MCF 10A (cell line): ENCODE measurements at regions of chr3 and their contacts with region 1.

Region 1: GRCh38 chr3:156554842-156555687 is at the start of gene SSR3:
- DNase-seq: peak; percentile 99
- H3K4me3 Mint-ChIP-seq: peak within 1 kb of the TSS; percentile 89
- H3K27ac Mint-ChIP-seq: peak within 1 kb of the TSS; percentile 92
- H3K4me1 Mint-ChIP-seq: peaks cover 30% of the 10 kb centered on the region
- H3K27me3 Mint-ChIP-seq: no peaks in the 10 kb centered on the region
- CTCF ChIP-seq: peak; percentile 8
- total RNA-seq, gene SSR3: 447 and 568 TPM in 2 replicates

Region 2: DNA sequence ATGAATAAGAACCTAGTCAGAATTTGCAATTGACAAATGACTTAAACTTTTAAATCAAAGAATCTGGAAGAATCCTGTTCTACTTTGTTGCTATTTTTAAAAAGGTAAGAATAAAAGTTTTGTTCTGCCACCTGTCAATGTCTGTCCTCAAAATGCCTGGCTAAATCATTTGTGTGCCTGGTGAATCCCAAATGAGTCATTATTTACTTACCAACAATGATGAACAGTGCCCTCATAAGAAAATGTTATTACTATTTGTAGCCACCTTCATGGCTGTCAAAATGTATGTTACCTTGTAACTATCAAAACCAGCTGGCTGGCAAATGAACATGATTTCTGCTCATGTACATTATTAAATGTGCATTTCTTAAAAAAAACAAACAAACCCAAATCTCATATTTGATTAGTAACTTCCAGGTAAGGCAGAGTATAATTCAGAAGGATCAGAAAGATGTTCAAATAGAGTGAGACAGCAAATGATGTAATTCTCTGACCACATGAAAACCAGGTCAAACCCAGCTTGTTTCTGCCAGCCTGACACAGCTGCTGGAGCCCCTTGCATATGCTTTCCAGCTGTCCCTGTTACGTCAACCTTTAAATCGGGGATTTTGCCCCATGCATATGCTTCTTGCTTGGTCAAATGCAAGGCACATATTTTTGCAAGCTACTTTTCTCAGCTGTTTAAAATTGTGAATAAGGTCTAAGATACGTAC is 138.1 kb before region 1 on chr3:
- CTCF ChIA-PET with region 1: no interaction called
- POLR2A ChIA-PET with region 1: no interaction called
- intact Hi-C with region 1: no loop called
- DNase-seq: no peak
- H3K4me3 Mint-ChIP-seq: no peak overlapping the region
- H3K27ac Mint-ChIP-seq: no peak overlapping the region
- H3K4me1 Mint-ChIP-seq: no peaks in the 10 kb centered on the region
- H3K27me3 Mint-ChIP-seq: peaks cover 27% of the 10 kb centered on the region
- CTCF ChIP-seq: no peak

Region 3: DNA sequence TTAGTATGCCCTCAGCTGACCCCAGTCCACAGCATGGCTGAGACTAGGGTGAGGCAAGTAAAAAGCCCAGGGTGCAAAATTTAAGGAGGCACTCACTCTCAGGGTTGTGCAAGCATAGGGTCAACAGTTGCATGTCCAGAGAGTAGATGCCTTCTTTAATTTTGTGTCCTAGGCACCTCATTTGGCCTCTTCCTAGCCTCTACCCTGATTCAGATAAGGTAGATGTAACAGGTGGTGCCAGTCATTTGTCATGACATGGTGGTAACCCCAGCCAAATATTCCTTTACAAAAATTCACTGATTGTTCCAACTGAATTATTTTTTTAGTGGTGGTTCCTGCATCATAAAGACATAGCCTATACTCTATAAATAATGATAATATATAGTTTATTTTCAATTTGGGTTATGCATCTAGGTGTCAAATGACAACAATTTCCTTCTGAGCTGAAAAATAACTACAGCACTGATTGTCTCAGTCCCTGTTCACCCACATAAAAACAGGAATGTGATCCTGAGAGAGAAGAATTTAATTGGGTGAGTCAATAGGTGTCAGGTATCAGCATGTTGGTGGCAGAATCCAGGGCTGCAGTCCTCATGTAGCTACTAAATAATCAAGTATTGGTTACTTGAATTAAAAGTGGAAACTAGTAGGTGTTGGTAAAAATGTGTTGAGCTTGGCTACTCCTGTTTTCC is 75.2 kb after region 1 on chr3:
- CTCF ChIA-PET with region 1: no interaction called
- POLR2A ChIA-PET with region 1: interaction called, 16 read pairs
- intact Hi-C with region 1: no loop called
- DNase-seq: peak; percentile 60
- H3K4me3 Mint-ChIP-seq: no peak overlapping the region
- H3K27ac Mint-ChIP-seq: no peak overlapping the region
- H3K4me1 Mint-ChIP-seq: peaks cover 16% of the 10 kb centered on the region
- H3K27me3 Mint-ChIP-seq: no peaks in the 10 kb centered on the region
- CTCF ChIP-seq: no peak

Region 4: DNA sequence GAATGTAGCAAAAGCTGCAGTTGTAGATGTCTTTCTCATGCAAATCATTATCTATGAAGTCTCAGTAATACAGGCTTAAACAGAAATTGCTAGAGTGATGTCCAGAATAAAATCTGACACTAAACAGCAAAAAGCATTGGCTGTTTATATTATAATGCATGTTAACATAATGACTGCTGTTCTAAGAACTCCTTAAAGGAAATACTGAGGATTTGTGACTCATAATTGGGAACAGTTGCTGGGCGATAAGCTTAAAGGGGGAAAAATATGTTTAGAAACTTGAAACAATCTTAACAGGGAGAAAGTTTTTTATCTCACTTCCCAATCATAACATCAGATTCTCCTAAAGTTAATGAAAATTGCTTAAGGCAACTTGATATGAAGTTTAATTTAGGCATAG is 136.9 kb after region 1 on chr3:
- CTCF ChIA-PET with region 1: no interaction called
- POLR2A ChIA-PET with region 1: interaction called, 15 read pairs
- intact Hi-C with region 1: no loop called
- DNase-seq: peak; percentile 47
- H3K4me3 Mint-ChIP-seq: peak overlapping the region; percentile 66
- H3K27ac Mint-ChIP-seq: peak overlapping the region; percentile 57
- H3K4me1 Mint-ChIP-seq: peaks cover 47% of the 10 kb centered on the region
- H3K27me3 Mint-ChIP-seq: no peaks in the 10 kb centered on the region
- CTCF ChIP-seq: no peak

Region 5: GRCh38 chr3:156826144-156826895 is 271.3 kb after region 1 on chr3 and contains the start of gene LEKR1:
- CTCF ChIA-PET with region 1: no interaction called
- POLR2A ChIA-PET with region 1: interaction called, 10 read pairs
- intact Hi-C with region 1: no loop called
- DNase-seq: peak; percentile 88
- H3K4me3 Mint-ChIP-seq: peak within 1 kb of the TSS; percentile 94
- H3K27ac Mint-ChIP-seq: peak within 1 kb of the TSS; percentile 98
- H3K4me1 Mint-ChIP-seq: no peaks in the 10 kb centered on the region
- H3K27me3 Mint-ChIP-seq: no peaks in the 10 kb centered on the region
- CTCF ChIP-seq: no peak
- total RNA-seq, gene LEKR1: 1.3 and 2.2 TPM in 2 replicates